B cell (primary cell): ENCODE measurements at regions of chr10 and their contacts with region 1.

Region 1: DNA sequence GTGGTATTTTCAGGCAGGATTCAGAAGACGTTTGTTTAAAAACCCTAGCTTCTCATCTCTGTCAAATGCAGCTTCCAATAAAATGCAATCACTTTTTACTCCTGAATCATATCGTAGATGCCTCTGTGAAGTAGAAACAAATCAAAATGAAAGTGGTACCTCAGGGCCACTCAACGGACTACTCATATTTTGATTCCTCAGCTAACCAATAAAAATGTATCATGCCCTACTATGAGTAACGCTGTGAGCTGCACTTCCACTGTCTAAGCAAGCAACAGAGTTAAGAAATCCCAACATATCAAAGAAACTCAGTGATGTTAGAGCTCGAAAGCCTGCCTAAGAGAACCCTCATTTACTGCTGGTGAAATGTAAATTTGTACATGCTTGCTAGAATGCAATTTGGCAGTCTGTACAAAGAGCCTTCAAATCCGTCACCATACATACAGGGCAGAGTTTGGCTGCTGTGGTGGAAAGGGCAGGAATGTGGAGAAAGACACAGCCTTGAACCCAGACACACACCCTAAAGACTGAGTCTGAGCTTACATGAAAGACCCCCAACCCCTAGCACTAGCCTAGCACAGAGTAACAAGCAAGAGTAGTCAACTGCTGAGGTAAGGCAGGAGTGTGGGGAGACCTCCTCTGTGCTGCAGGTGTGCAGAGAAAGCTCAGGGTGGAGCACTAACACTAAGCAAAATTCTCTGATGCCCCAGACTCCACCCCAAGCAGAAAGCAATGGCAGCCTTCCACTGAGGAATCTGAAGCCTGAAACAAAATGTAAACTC is 151.5 kb downstream of the ANK3 start:
- DNase-seq: peak; percentile 68
- ATAC-seq: peak; percentile 40
- H3K4me3 ChIP-seq: peak overlapping the region in 4 of 5 experiments; percentile 32 to 68 (median 52)
- H3K4me3 Mint-ChIP-seq: peak overlapping the region; percentile 74
- H3K27ac ChIP-seq: peak overlapping the region; percentile 83 to 93
- H3K27ac Mint-ChIP-seq: peak overlapping the region; percentile 92
- H3K4me1 ChIP-seq: peaks cover 56 to 57% of the 10 kb centered on the region in 2 donors
- H3K4me1 Mint-ChIP-seq: peaks cover 56% of the 10 kb centered on the region
- H3K27me3 ChIP-seq: no peaks in the 10 kb centered on the region
- H3K27me3 Mint-ChIP-seq: no peaks in the 10 kb centered on the region
- CTCF ChIP-seq: peak; percentile 49

Region 2: GRCh38 chr10:59830601-59831259 is 407.4 kb before region 1 on chr10:
- CTCF ChIA-PET with region 1: interaction called, 11 read pairs
- POLR2A ChIA-PET with region 1: no interaction called
- intact Hi-C with region 1: loop called (anchors 5 kb)
- DNase-seq: peak; percentile 54
- ATAC-seq: no peak
- H3K4me3 ChIP-seq: no peak overlapping the region
- H3K4me3 Mint-ChIP-seq: no peak overlapping the region
- H3K27ac ChIP-seq: no peak overlapping the region
- H3K27ac Mint-ChIP-seq: no peak overlapping the region
- H3K4me1 ChIP-seq: peaks cover 24 to 36% of the 10 kb centered on the region in 2 donors
- H3K4me1 Mint-ChIP-seq: peaks cover 72% of the 10 kb centered on the region
- H3K27me3 ChIP-seq: no peaks in the 10 kb centered on the region
- H3K27me3 Mint-ChIP-seq: no peaks in the 10 kb centered on the region
- CTCF ChIP-seq: peak; percentile 75

Region 3: DNA sequence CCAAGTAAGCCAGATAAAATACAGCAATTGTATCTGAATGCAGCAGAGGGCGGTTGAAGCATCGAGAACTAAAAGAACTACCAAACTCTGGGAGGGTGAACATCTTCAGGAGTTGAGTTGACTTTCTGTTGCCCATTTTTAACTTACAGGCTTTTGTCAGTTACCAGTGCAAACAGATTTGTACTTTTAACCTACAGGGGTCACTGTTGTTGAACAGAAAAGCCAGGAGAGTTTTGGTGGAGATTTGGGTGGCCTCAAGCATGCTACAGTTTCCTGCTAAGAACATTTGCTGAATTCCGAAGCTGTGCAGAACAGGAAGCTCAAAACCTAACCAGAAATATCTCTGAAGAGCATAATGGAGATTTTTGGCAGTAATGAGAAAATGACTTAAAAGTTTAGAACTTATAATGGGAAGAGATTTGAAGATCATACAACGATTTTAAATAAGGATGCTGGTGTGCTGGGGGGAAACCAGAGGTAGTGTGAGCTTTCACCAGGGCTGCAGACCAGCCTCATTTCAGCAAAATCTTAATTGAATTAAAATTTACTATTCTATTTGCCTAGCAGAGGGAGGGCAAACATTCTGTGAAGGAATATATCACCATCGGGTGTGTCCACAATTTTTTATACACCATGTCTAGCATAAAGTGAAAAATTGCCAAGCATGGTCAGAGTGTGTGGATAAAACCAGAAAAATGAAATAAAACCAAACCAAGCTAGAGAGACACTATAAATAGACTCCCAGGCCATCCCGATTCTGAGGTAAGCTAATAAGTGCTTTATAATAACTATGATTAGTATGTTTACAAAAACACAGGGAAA is 123.2 kb before region 1 on chr10:
- CTCF ChIA-PET with region 1: interaction called, 20 read pairs
- POLR2A ChIA-PET with region 1: no interaction called
- intact Hi-C with region 1: loop called (anchors 10 kb)
- DNase-seq: peak; percentile 61
- ATAC-seq: peak; percentile 53
- H3K4me3 ChIP-seq: no peak overlapping the region
- H3K4me3 Mint-ChIP-seq: no peak overlapping the region
- H3K27ac ChIP-seq: no peak overlapping the region
- H3K27ac Mint-ChIP-seq: no peak overlapping the region
- H3K4me1 ChIP-seq: peaks cover 4 to 6% of the 10 kb centered on the region in 2 donors
- H3K4me1 Mint-ChIP-seq: no peaks in the 10 kb centered on the region
- H3K27me3 ChIP-seq: no peaks in the 10 kb centered on the region
- H3K27me3 Mint-ChIP-seq: no peaks in the 10 kb centered on the region
- CTCF ChIP-seq: peak; percentile 68

Region 4: DNA sequence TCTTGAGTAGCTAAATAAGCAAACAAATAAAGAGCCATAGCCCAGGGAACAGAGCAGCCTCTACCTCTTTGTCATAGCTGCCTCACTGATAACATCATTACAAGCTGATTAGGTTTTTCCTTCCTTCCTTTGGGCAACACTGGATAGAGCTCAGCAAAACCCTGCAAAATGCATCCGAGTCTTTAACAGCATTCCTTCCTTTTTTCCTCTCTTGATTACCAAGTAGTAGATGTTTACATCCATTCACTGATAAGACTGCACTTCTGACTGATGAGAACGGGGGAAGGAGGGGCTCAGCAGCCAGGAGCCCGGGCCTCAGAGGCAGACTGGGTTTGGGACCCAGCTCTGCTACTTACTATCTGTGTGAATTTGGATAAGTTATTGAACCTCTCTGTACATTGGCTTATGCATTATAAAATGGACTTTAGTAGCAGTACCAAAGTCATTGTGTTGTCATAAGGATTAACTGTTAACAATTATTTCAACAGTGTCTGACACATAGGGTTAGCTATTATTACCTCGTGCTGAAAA is 62.7 kb before region 1 on chr10:
- CTCF ChIA-PET with region 1: no interaction called
- POLR2A ChIA-PET with region 1: no interaction called
- intact Hi-C with region 1: no loop called
- DNase-seq: no peak
- ATAC-seq: no peak
- H3K4me3 ChIP-seq: no peak overlapping the region
- H3K4me3 Mint-ChIP-seq: no peak overlapping the region
- H3K27ac ChIP-seq: no peak overlapping the region
- H3K27ac Mint-ChIP-seq: no peak overlapping the region
- H3K4me1 ChIP-seq: no peaks in the 10 kb centered on the region
- H3K4me1 Mint-ChIP-seq: no peaks in the 10 kb centered on the region
- H3K27me3 ChIP-seq: no peaks in the 10 kb centered on the region
- H3K27me3 Mint-ChIP-seq: no peaks in the 10 kb centered on the region
- CTCF ChIP-seq: no peak

Region 5: GRCh38 chr10:60335708-60336107 is 97.5 kb after region 1 on chr10:
- CTCF ChIA-PET with region 1: interaction called, 35 read pairs
- POLR2A ChIA-PET with region 1: no interaction called
- intact Hi-C with region 1: no loop called
- DNase-seq: peak; percentile 13
- ATAC-seq: peak; percentile 41
- H3K4me3 ChIP-seq: no peak overlapping the region
- H3K4me3 Mint-ChIP-seq: no peak overlapping the region
- H3K27ac ChIP-seq: no peak overlapping the region
- H3K27ac Mint-ChIP-seq: no peak overlapping the region
- H3K4me1 ChIP-seq: no peaks in the 10 kb centered on the region
- H3K4me1 Mint-ChIP-seq: peaks cover 2% of the 10 kb centered on the region
- H3K27me3 ChIP-seq: no peaks in the 10 kb centered on the region
- H3K27me3 Mint-ChIP-seq: no peaks in the 10 kb centered on the region
- CTCF ChIP-seq: no peak

Region 6: GRCh38 chr10:60434418-60435046 is 196.4 kb after region 1 on chr10:
- CTCF ChIA-PET with region 1: interaction called, 257 read pairs
- POLR2A ChIA-PET with region 1: interaction called, 3 read pairs
- intact Hi-C with region 1: loop called (anchors 1 kb)
- DNase-seq: peak; percentile 61
- ATAC-seq: peak; percentile 56
- H3K4me3 ChIP-seq: no peak overlapping the region
- H3K4me3 Mint-ChIP-seq: no peak overlapping the region
- H3K27ac ChIP-seq: no peak overlapping the region
- H3K27ac Mint-ChIP-seq: no peak overlapping the region
- H3K4me1 ChIP-seq: no peaks in the 10 kb centered on the region
- H3K4me1 Mint-ChIP-seq: peaks cover 7% of the 10 kb centered on the region
- H3K27me3 ChIP-seq: no peaks in the 10 kb centered on the region
- H3K27me3 Mint-ChIP-seq: no peaks in the 10 kb centered on the region
- CTCF ChIP-seq: peak; percentile 77

Region 7: DNA sequence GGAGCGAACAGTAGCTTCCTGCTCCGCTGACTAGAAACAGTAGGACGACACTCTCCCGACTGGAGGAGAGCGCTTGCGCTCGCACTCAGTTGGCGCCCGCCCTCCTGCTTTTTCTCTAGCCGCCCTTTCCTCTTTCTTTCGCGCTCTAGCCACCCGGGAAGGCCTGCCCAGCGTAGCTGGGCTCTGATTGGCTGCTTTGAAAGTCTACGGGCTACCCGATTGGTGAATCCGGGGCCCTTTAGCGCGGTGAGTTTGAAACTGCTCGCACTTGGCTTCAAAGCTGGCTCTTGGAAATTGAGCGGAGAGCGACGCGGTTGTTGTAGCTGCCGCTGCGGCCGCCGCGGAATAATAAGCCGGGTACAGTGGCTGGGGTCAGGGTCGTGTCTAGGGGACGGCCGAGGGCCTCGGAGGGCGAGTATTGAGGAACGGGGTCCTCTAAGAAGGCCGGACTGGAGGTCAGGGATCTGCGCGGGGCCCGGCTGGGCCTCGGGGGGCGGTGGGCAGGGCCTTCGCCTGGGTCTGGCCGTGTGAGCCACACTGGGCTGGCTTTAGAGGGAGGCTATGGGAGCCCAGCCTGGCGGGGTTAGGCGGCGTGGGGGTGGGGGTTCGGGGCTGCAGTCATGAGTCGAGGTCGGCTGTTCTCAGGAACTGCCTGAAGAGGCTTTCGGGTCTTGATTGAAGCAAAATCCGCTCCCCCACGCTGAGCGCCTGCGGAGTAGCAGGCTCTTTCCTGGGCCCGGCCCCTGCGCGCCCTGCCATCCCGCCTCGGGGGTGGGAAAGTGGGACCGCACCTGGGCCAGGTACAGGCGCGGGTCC is 540.3 kb after region 1 on chr10 and contains the start of gene CDK1:
- CTCF ChIA-PET with region 1: no interaction called
- POLR2A ChIA-PET with region 1: no interaction called
- intact Hi-C with region 1: loop called (anchors 2 kb)
- DNase-seq: peak; percentile 96
- ATAC-seq: peak; percentile 99
- H3K4me3 ChIP-seq: peak within 1 kb of the TSS; percentile 45 to 77 (median 56)
- H3K4me3 Mint-ChIP-seq: peak within 1 kb of the TSS; percentile 98
- H3K27ac ChIP-seq: no peak within 1 kb of the TSS
- H3K27ac Mint-ChIP-seq: peak within 1 kb of the TSS; percentile 75
- H3K4me1 ChIP-seq: peaks cover 9% of the 10 kb centered on the region in 2 donors
- H3K4me1 Mint-ChIP-seq: peaks cover 13% of the 10 kb centered on the region
- H3K27me3 ChIP-seq: no peaks in the 10 kb centered on the region
- H3K27me3 Mint-ChIP-seq: no peaks in the 10 kb centered on the region
- CTCF ChIP-seq: no peak
- total RNA-seq, gene CDK1: 0.71 and 1.1 TPM in 2 replicates